ENCODE measurements at regions of chr9 and their contacts with region 1.

Region 1: GRCh38 chr9:97468658-97469448 is 32.6 kb upstream of the TMOD1 start:
- DNase-seq: peak; percentile 76
- ATAC-seq: peak; percentile 97 to 98

Region 2: GRCh38 chr9:97324954-97325353 is 143.9 kb before region 1 on chr9:
- intact Hi-C with region 1: no loop called
- DNase-seq: no peak
- ATAC-seq: no peak

Region 3: GRCh38 chr9:97570899-97571298 is 102.0 kb after region 1 on chr9:
- intact Hi-C with region 1: no loop called
- DNase-seq: peak; percentile 73
- ATAC-seq: peak; percentile 84 to 91

Region 4: DNA sequence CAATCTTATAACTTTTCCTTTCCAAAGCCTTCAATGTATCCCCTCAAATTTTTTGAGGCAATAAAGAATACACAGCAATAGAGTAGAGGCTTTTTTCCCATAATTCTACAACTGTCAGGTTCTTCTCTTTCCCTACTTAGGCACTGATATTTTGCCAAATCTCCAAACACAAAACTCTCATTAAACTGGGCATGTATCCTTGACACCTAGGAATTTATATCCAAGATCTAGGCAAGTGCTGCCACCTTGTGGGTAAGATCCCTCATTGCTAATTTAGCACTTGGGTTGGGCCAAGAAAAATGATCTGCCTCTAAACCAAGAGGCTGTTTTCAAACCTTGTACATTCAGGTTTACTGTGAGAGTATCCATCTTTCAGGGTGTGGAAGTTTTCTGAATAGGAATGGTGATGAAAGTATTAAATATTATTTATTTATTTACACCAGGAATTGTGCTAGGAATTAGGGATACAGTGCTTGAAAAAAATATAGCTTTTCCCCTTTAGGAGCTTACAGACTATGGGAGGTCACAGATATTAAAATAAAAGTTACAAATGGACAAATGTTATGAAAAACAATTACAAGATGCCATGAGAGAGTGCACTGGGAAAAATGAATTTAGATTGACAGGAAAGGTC is 146.7 kb after region 1 on chr9:
- intact Hi-C with region 1: loop called (anchors 1 to 5 kb)
- DNase-seq: peak; percentile 54
- ATAC-seq: peak; percentile 70 to 73

Region 5: GRCh38 chr9:97830884-97831829 is 362.3 kb after region 1 on chr9:
- intact Hi-C with region 1: no loop called
- DNase-seq: no peak
- ATAC-seq: no peak

Measured in left cardiac atrium (tissue), 4 donors.